Mammary epithelial cell (primary cell): ENCODE measurements at regions of chr20 and their contacts with region 1.

Region 1: DNA sequence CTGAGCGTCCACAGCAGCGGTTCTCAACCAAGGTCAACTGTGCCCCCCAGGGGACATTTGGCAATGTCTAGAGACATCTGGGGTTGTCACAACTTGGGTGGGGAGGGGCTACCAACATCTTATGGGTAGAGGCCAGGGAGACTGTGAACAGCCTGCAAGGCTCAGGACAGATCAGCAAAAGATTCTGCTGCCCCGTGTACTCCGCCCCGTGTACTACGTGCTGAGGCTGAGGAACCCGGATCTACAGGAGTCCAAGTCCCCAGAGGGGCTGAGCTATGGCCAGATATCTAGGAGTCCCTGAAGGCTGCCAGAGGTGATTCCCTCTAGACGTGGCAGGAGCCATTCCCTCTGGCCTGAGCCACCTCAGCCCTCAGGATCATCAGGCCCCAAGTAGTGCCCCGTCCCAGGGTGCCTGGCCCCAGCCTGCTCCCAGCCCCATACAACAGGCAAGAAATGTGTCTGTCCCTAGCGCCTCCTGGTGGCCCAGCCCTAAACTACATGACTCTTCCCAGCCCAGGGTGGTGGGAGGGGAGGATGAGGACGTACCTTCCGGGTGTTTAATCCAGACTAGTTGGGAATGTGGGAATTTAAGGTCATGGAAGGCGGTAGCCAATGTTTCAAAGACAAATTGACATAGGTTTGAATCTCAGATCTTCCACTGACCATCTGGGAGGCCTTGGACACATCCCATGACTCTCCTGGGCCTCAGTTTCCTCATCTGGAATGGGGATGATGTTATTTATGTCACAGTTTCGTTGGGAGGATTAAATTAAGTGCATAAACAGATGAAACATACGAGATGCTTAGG is 49.5 kb upstream of the PTPN1 start:
- DNase-seq: peak; percentile 73
- H3K4me3 ChIP-seq: no peak overlapping the region
- H3K27ac ChIP-seq: no peak overlapping the region
- H3K4me1 ChIP-seq: peaks cover 18% of the 10 kb centered on the region
- H3K27me3 ChIP-seq: no peaks in the 10 kb centered on the region
- CTCF ChIP-seq: peak; percentile 95

Region 2: DNA sequence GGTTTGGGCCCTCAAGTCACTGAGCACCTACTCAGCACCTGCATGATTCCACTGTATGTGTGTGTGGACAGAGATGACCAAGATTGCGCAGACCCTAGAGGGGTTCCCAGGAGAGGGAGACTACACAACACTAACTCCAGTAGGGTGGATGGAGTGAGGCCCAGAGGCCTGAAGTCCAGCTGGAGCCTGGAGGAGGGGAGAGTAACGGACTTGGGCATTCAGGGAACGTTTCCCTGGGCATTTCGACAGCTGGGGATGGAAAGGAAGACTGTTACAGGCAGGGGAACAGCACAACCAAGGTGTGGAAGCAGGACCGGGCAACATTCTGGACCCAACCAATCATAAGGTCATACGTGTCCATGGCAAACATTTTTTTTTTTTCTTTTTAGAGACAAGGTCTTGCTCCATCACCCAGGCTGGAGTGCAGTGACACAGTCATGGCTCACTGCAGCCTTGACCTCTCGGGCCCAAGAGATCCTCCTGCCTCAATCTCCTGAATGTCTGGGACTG is 281.1 kb before region 1 on chr20:
- CTCF ChIA-PET with region 1: no interaction called
- dilution Hi-C with region 1: no loop called
- in situ Hi-C with region 1: loop called in 1 of 2 experiments (anchors 5 kb)
- intact Hi-C with region 1: no loop called
- DNase-seq: no peak
- H3K4me3 ChIP-seq: no peak overlapping the region
- H3K27ac ChIP-seq: no peak overlapping the region
- H3K4me1 ChIP-seq: no peaks in the 10 kb centered on the region
- H3K27me3 ChIP-seq: no peaks in the 10 kb centered on the region
- CTCF ChIP-seq: no peak

Region 3: DNA sequence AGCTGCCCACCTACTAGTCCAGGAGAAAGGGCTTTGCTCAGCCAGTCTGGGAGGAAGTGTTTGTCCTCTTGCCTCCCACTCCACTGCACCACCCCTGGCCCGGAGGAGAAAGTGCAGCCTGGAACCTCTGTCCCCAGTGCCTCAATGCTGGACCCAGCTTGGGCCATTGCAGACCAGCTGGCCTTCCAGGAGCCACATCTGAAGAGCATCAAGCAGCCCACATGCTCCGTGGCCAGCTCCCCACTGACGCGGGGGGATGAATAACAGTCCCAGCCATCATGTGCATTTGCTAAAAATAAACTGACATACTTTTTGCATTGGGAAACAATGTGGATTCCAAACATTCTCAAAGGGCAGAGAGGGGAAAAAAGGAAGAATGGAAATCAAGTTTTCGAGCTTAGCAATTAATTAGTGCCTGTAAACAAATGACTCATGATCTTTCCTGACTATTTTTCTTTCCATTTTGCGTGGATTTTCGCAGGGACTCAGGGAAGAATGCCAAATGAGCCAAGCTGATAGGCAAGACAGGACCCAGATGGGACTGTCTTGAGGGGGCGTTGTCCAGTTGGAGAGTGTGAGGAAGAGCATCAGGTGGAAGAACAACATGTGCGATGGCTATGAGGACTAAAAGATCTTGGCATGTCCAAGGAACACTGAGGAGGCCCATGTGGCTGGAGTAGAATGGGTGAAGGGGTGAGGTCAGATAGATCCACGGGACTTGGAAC is 236.0 kb before region 1 on chr20:
- CTCF ChIA-PET with region 1: no interaction called
- dilution Hi-C with region 1: loop called (anchors 5 kb)
- in situ Hi-C with region 1: no loop called
- intact Hi-C with region 1: no loop called
- DNase-seq: peak; percentile 36
- H3K4me3 ChIP-seq: no peak overlapping the region
- H3K27ac ChIP-seq: no peak overlapping the region
- H3K4me1 ChIP-seq: peaks cover 24% of the 10 kb centered on the region
- H3K27me3 ChIP-seq: no peaks in the 10 kb centered on the region
- CTCF ChIP-seq: peak; percentile 3 to 8

Region 4: GRCh38 chr20:50308513-50309279 is 152.0 kb before region 1 on chr20:
- CTCF ChIA-PET with region 1: no interaction called
- dilution Hi-C with region 1: no loop called
- in situ Hi-C with region 1: no loop called
- intact Hi-C with region 1: loop called (anchors 5 kb)
- DNase-seq: peak; percentile 96
- H3K4me3 ChIP-seq: peak overlapping the region in 1 of 3 experiments; percentile 7
- H3K27ac ChIP-seq: peak overlapping the region; percentile 90
- H3K4me1 ChIP-seq: peaks cover 59% of the 10 kb centered on the region
- H3K27me3 ChIP-seq: no peaks in the 10 kb centered on the region
- CTCF ChIP-seq: peak in 1 of 2 donors; percentile 36

Region 5: GRCh38 chr20:50399917-50400704 is 60.6 kb before region 1 on chr20:
- CTCF ChIA-PET with region 1: interaction called, 3 read pairs
- dilution Hi-C with region 1: no loop called
- in situ Hi-C with region 1: no loop called
- intact Hi-C with region 1: loop called (anchors 1 kb)
- DNase-seq: peak; percentile 44
- H3K4me3 ChIP-seq: no peak overlapping the region
- H3K27ac ChIP-seq: no peak overlapping the region
- H3K4me1 ChIP-seq: peaks cover 11% of the 10 kb centered on the region
- H3K27me3 ChIP-seq: no peaks in the 10 kb centered on the region
- CTCF ChIP-seq: peak in 1 of 2 donors; percentile 36

Region 6: GRCh38 chr20:50438986-50439407 is 21.7 kb before region 1 on chr20:
- CTCF ChIA-PET with region 1: no interaction called
- dilution Hi-C with region 1: no loop called
- in situ Hi-C with region 1: no loop called
- intact Hi-C with region 1: loop called (anchors 1 kb)
- DNase-seq: peak; percentile 100
- H3K4me3 ChIP-seq: no peak overlapping the region
- H3K27ac ChIP-seq: peak overlapping the region; percentile 89
- H3K4me1 ChIP-seq: peaks cover 38% of the 10 kb centered on the region
- H3K27me3 ChIP-seq: no peaks in the 10 kb centered on the region
- CTCF ChIP-seq: no peak

Region 7: DNA sequence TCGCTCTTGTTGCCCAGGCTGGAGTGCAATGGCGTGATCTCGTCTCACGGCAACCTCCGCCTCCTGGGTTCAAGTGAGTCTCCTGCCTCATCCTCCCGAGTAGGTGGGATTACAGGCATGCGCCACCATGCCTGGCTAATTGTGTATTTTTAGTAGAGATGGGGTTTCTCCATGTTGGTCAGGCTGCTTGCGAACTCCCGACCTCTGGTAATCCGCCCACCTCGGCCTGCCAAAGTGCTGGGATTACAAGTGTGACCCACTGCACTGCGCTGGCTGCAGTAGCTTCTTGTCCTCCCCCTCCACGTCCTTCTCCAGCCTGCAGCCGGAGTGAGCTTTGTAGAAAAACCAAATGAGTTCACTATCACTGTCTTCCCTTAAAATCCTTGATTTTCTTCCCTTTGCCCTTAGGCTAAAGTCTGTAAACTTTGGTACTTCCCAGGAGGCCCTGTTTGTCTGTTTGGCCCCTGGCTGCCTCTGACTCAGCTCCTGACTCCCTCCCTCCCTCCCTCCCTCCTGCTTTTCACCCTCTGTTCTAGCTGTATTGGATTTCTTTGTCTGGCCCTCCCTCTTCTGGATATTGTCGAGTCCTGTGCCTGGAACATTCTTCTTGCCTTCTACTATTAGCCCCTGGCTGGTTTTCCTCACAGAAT is 283.6 kb after region 1 on chr20:
- CTCF ChIA-PET with region 1: no interaction called
- dilution Hi-C with region 1: loop called (anchors 5 kb)
- in situ Hi-C with region 1: no loop called
- intact Hi-C with region 1: no loop called
- DNase-seq: peak; percentile 89
- H3K4me3 ChIP-seq: no peak overlapping the region
- H3K27ac ChIP-seq: peak overlapping the region; percentile 58
- H3K4me1 ChIP-seq: peaks cover 43% of the 10 kb centered on the region
- H3K27me3 ChIP-seq: no peaks in the 10 kb centered on the region
- CTCF ChIP-seq: peak; percentile 47 to 56